ENCODE measurements at regions of chr12 and their contacts with region 1.

Region 1: GRCh38 chr12:27747111-27747820 is 32.8 kb upstream of the KLHL42 start:
- DNase-seq: peak; percentile 85
- ATAC-seq: peak; percentile 86
- H3K4me3 ChIP-seq: peak overlapping the region; percentile 47
- H3K27ac ChIP-seq: peak overlapping the region; percentile 94
- H3K4me1 ChIP-seq: peaks cover 49% of the 10 kb centered on the region
- H3K27me3 ChIP-seq: no peaks in the 10 kb centered on the region
- CTCF ChIP-seq: no peak

Region 2: GRCh38 chr12:27682534-27682933 is 64.7 kb before region 1 on chr12:
- CTCF ChIA-PET with region 1: no interaction called
- POLR2A ChIA-PET with region 1: no interaction called
- intact Hi-C with region 1: no loop called
- DNase-seq: no peak
- ATAC-seq: no peak
- H3K4me3 ChIP-seq: no peak overlapping the region
- H3K27ac ChIP-seq: no peak overlapping the region
- H3K4me1 ChIP-seq: no peaks in the 10 kb centered on the region
- H3K27me3 ChIP-seq: no peaks in the 10 kb centered on the region
- CTCF ChIP-seq: no peak

Region 3: DNA sequence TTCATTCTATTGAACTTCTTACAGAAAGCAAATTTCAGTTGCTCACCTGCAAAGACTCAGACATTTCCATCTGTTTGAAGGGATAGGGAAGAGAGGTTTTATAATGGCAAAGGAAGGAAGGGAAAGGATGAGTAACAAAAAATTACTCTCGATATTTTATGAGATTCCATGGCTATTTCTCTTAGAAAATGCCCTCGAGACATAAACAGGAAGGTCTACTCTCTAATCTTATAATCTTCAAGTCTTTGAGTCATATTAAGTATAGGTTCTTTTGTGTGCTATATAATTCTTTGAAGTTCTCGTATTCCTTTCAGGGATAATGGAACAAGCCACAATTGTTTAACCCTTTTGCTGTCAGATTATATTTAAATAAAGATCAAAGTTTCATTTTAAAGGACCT is 25.4 kb after region 1 on chr12:
- CTCF ChIA-PET with region 1: no interaction called
- POLR2A ChIA-PET with region 1: no interaction called
- intact Hi-C with region 1: loop called (anchors 1 kb)
- DNase-seq: peak; percentile 97
- ATAC-seq: peak; percentile 88
- H3K4me3 ChIP-seq: peak overlapping the region; percentile 44
- H3K27ac ChIP-seq: peak overlapping the region; percentile 88
- H3K4me1 ChIP-seq: peaks cover 32% of the 10 kb centered on the region
- H3K27me3 ChIP-seq: no peaks in the 10 kb centered on the region
- CTCF ChIP-seq: no peak

Region 4: GRCh38 chr12:28051516-28052354 is 304.5 kb after region 1 on chr12:
- CTCF ChIA-PET with region 1: no interaction called
- POLR2A ChIA-PET with region 1: no interaction called
- intact Hi-C with region 1: no loop called
- DNase-seq: no peak
- ATAC-seq: no peak
- H3K4me3 ChIP-seq: no peak overlapping the region
- H3K27ac ChIP-seq: no peak overlapping the region
- H3K4me1 ChIP-seq: peaks cover 6% of the 10 kb centered on the region; the same call in 1 of the 2 replicates
- H3K27me3 ChIP-seq: no peaks in the 10 kb centered on the region
- CTCF ChIP-seq: no peak

Measured in PC-3 (cell line).